Vagina (tissue), 2 donors: ENCODE measurements at regions of chr3 and their contacts with region 1.

Region 1: DNA sequence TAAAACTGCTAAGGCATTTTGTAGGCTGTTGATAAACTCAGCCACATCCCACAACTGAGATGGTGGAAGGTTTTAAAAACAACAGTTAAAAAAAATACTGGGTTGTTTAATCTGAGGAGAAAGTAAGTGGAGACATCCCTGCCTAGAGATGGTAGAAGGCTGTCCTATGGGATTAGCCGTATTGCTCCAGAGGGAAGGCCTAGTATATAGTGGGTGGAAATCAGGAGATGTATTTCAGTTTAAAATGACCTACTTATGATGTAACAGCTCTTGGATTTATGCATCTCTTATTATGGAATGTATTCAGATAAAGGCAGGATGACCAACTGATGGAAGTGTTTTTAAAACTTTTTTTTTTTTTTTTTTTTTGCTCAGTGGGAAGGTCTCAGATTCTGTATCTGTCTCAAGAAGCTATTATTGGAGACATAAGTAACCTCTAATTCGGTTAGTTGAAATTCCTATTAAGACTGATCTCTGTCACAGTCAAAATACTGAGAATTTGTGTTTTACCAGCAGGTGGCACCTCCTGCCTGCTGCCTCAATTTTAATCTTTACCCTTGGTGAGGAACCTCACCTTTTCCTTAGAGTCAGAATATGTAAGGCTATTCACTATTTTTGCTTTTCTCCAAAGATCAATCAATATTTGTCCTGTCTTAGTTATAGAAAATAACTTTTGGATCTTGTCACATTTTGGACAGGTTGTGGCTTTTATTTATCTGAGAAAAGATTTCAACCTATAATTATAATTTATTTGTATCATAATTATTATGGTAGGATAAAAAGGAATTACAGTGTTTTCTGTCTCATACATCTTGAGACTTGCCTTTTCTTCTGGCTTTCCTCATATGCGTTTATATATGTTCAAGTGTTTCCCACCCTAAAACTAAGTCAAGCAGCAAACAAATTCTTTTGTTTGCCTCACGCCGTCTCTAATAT is 63.0 kb downstream of the VPS8 start:
- DNase-seq: no peak
- H3K4me3 ChIP-seq: no peak overlapping the region
- H3K27ac ChIP-seq: no peak overlapping the region
- H3K4me1 ChIP-seq: no peaks in the 10 kb centered on the region
- H3K27me3 ChIP-seq: no peaks in the 10 kb centered on the region
- CTCF ChIP-seq: peak; percentile 15 to 40 (median 28)
- POLR2A ChIP-seq: no peak

Region 2: DNA sequence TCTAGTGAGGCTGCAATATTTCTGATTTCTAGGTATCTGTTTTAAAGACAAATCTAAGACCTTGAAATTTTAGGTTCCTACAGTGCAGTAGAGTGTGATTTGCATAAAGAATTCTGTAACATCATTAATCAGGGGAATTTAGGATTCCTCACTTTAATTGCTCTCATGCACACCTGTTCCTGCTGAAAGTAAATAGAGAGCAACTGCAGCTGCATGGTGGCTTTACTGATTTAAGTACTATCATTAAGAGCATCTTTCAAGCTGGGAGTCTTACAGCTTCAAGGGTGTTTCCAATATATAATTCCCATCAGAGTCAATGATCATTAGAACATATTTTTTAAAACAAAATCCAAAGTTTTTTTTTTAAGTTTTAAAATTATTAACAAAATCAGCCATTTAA is 313.8 kb after region 1 on chr3:
- intact Hi-C with region 1: loop called (anchors 10 kb)
- DNase-seq: no peak
- H3K4me3 ChIP-seq: no peak overlapping the region
- H3K27ac ChIP-seq: no peak overlapping the region
- H3K4me1 ChIP-seq: no peaks in the 10 kb centered on the region
- H3K27me3 ChIP-seq: no peaks in the 10 kb centered on the region
- CTCF ChIP-seq: no peak
- POLR2A ChIP-seq: no peak